ENCODE measurements at regions of chr20 and their contacts with region 1.

Region 1: GRCh38 chr20:25039396-25040115 is 18.4 kb downstream of the ACSS1 start:
- DNase-seq: peak; percentile 82
- ATAC-seq: peak; percentile 69 to 71

Region 2: DNA sequence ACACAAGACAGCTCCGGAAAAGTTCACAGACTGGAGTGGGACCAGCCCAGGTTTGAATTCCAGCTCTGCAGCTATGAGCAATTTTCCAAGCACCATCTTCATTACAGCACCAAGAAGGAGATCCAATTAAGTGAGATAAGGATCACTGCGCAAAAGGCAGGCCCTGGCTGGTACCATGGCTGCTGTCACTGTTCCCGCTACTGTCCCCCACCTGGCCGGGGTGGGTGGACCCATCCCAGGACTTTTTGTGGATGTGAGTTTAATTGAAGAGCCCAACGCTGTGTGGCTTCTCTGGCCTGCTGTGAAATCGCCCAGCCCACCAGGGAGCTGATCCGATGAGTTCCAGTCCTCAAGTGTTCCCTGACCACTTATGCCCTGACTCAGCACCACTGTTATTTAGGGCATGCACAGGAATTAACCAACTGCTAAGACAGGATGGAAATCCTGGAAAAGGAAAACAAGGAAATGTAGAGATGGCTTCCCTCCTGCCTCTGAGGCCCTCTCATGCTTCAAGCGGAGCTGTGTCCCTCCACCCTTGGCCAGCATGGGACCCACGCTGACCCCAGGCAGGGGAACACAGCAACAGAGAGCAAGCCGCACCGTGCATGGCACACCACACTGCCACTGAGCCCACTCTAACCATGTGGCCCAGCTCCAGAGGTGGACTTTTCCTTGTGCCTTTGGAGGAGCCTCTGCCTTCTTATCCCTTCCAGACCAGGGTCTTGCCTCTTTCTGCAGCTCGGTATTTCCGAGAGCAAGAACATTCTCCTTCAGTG is 240.4 kb before region 1 on chr20:
- intact Hi-C with region 1: no loop called
- DNase-seq: no peak
- ATAC-seq: no peak

Region 3: DNA sequence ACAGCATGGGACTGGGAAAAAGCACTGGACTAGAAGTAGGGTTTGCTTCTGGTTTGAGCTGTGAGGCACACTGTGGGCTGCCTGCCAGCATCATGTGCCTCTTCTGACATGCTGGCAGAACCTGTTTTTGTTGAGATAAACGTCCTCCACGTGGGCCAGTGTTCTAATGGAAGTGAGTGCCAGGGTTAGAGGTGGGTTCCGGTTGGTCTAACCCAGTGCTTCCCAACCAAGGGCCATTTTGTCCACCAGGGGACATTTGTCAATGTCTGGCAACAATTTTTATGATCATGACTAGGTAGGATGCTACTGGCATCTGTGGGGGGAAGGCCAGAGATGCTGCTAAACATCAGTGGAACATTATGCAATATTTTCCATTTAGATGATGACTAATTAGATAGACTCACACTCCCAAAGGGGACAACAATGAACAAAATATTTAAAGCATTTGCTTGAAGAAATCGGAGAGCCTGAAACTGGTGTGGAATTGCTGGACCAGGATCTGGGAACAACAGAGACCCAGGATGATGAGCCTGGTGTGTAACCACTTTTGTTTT is 39.2 kb before region 1 on chr20:
- intact Hi-C with region 1: loop called in 1 of 2 experiments (anchors 5 kb)
- DNase-seq: peak; percentile 73
- ATAC-seq: peak; percentile 38 to 69

Measured in left cardiac atrium (tissue), 4 donors.